GM13976 (cell line): ENCODE measurements at regions of chr17 and their contacts with region 1.

Region 1: GRCh38 chr17:63478791-63479494 is 2.1 kb downstream of the ACE start:
- DNase-seq: peak; percentile 94
- CTCF ChIP-seq: peak; percentile 82

Region 2: GRCh38 chr17:63425482-63425881 is 53.5 kb before region 1 on chr17:
- in situ Hi-C with region 1: loop called (anchors 10 kb)
- DNase-seq: peak; percentile 83
- CTCF ChIP-seq: peak; percentile 79